WTC11 (cell line): ENCODE measurements at regions of chr1 and their contacts with region 1.

Region 1: GRCh38 chr1:36187800-36188593 is 32.0 kb downstream of the MAP7D1 start:
- DNase-seq: peak; percentile 86
- ATAC-seq: peak; percentile 94
- H3K4me3 Mint-ChIP-seq: peak overlapping the region; percentile 56
- H3K27ac Mint-ChIP-seq: peak overlapping the region; percentile 94
- H3K4me1 Mint-ChIP-seq: peaks cover 15% of the 10 kb centered on the region
- H3K27me3 Mint-ChIP-seq: no peaks in the 10 kb centered on the region
- CTCF ChIP-seq: peak; percentile 70

Region 2: GRCh38 chr1:36068883-36069282 is 119.1 kb before region 1 on chr1:
- CTCF ChIA-PET with region 1: no interaction called
- POLR2A ChIA-PET with region 1: no interaction called
- DNase-seq: no peak
- ATAC-seq: no peak
- H3K4me3 Mint-ChIP-seq: no peak overlapping the region
- H3K27ac Mint-ChIP-seq: no peak overlapping the region
- H3K4me1 Mint-ChIP-seq: peaks cover 11% of the 10 kb centered on the region
- H3K27me3 Mint-ChIP-seq: no peaks in the 10 kb centered on the region
- CTCF ChIP-seq: no peak

Region 3: DNA sequence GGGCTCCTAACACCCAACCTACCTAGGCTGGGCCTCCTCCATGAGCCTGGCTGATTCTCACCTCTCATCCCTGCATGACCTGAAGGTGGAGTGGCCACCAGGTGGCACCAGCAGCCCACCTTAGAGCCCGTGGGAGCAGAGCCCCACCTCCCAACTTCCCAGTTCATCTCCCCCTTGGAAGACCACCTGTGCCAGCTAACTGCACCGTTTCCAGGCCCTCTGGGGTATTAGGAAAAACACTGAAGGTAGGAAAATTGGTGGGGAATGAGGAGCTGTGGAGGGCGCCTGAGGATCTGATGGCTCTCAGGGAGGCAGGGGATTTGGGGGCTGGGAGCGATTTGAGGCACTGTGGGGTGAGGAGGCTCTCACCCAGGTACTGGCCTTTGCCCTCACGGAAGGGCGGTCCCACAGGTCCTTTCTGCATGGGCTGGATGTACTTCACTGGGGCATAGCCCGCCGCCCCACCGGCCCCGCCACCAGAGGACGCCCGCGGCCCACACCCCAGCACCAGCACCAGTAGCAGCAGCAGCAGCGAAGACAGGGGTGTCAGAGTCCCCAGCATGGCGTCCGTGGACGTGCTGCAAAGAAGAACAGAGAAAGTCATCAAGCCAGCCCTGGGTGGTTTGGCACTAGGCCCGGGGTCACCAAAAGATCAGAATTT is 88.2 kb before region 1 on chr1:
- CTCF ChIA-PET with region 1: interaction called, 41 read pairs
- POLR2A ChIA-PET with region 1: no interaction called
- DNase-seq: peak; percentile 92
- ATAC-seq: peak; percentile 76
- H3K4me3 Mint-ChIP-seq: no peak overlapping the region
- H3K27ac Mint-ChIP-seq: no peak overlapping the region
- H3K4me1 Mint-ChIP-seq: peaks cover 16% of the 10 kb centered on the region
- H3K27me3 Mint-ChIP-seq: no peaks in the 10 kb centered on the region
- CTCF ChIP-seq: peak; percentile 76

Region 4: GRCh38 chr1:36155408-36156328 is 32.3 kb before region 1 on chr1 and contains the start of gene MAP7D1:
- CTCF ChIA-PET with region 1: interaction called, 213 read pairs
- POLR2A ChIA-PET with region 1: interaction called, 25 read pairs
- DNase-seq: peak; percentile 80
- ATAC-seq: peak; percentile 43
- H3K4me3 Mint-ChIP-seq: peak within 1 kb of the TSS; percentile 79
- H3K27ac Mint-ChIP-seq: no peak within 1 kb of the TSS
- H3K4me1 Mint-ChIP-seq: peaks cover 43% of the 10 kb centered on the region
- H3K27me3 Mint-ChIP-seq: peaks cover 37% of the 10 kb centered on the region
- CTCF ChIP-seq: no peak
- total RNA-seq, gene MAP7D1: 65.0 to 88.7 TPM (median 72.0 TPM) in 3 replicates

Region 5: DNA sequence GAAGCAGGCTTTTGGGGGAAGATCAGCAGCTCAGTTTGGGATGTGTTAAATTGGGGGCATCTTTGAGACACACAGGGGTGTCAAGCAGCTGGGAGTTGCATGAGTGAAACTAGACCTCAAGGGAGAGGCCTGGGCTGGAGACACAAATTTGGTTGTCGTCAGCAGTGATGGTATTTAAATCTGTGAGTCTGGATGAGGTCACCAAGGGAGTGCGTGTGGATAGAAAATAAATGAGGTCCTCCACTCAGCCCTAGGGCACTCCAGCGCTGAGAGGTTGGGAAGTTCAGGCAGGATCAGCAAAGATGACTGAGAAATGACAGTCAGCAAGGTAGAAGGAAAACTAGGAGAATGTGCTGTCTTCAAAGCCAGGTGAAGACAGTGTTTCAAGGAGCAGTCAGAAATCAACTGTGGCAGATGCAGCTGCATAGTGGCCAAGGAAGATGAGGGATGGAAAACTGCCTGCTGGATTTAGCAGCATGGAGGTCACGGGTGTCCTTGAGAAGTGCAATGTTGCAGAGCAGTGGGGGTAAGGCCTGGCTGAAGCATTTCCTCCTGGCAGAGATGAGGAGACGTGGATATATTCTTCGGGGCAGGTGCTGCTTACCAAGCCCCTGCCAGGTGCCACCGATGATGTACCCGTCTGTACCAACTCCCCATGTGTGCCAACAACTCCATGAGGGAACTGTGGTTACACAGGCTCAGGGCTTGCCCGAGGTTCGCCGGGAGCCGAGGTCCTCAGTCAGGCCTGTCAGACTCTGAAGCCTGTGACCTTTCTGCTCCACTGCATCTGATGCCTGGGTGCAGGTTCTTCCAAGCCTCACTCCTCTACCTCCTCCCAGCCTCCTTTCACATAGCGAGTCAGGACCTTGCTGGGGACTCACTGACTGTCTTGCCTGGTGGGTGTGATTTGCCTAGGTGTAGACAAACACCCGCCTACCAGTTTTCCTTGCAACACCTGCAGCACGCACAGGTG is 20.8 kb before region 1 on chr1:
- CTCF ChIA-PET with region 1: interaction called, 71 read pairs
- POLR2A ChIA-PET with region 1: no interaction called
- DNase-seq: no peak
- ATAC-seq: no peak
- H3K4me3 Mint-ChIP-seq: no peak overlapping the region
- H3K27ac Mint-ChIP-seq: peak overlapping the region; percentile 12
- H3K4me1 Mint-ChIP-seq: peaks cover 3% of the 10 kb centered on the region
- H3K27me3 Mint-ChIP-seq: no peaks in the 10 kb centered on the region
- CTCF ChIP-seq: no peak

Region 6: DNA sequence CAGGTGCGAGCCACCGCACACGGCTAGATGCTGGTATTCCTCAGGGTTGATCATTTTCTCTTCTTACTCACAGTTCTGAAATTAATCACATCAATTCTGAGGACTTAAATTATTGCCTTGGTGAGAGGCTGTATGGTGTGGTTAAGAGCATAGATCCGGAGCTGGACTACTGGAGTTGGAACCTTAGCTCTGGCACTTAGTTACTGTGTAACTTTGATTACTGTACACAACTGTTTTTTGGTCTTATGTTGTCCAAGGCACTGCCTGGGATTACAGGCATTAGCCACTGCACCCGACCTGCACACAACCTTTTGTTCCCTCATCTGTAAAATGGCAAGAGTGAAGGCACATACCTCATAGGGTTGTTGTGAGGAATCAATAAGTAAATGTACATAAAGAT is 10.6 kb after region 1 on chr1:
- CTCF ChIA-PET with region 1: interaction called, 20 read pairs
- POLR2A ChIA-PET with region 1: no interaction called
- DNase-seq: no peak
- ATAC-seq: no peak
- H3K4me3 Mint-ChIP-seq: no peak overlapping the region
- H3K27ac Mint-ChIP-seq: no peak overlapping the region
- H3K4me1 Mint-ChIP-seq: peaks cover 4% of the 10 kb centered on the region
- H3K27me3 Mint-ChIP-seq: no peaks in the 10 kb centered on the region; the same call in 1 of the 2 replicates
- CTCF ChIP-seq: no peak

Region 7: GRCh38 chr1:36285448-36286101 is 97.6 kb after region 1 on chr1:
- CTCF ChIA-PET with region 1: interaction called, 18 read pairs
- POLR2A ChIA-PET with region 1: no interaction called
- DNase-seq: peak; percentile 44
- ATAC-seq: peak; percentile 71
- H3K4me3 Mint-ChIP-seq: no peak overlapping the region
- H3K27ac Mint-ChIP-seq: peak overlapping the region; percentile 57; the same call in 1 of the 2 replicates
- H3K4me1 Mint-ChIP-seq: no peaks in the 10 kb centered on the region
- H3K27me3 Mint-ChIP-seq: no peaks in the 10 kb centered on the region
- CTCF ChIP-seq: peak; percentile 55

Region 8: GRCh38 chr1:36323597-36324352 is 135.8 kb after region 1 on chr1 and contains the start of gene EVA1B:
- CTCF ChIA-PET with region 1: interaction called, 10 read pairs
- POLR2A ChIA-PET with region 1: interaction called, 8 read pairs
- DNase-seq: peak; percentile 74
- ATAC-seq: peak; percentile 15
- H3K4me3 Mint-ChIP-seq: peak within 1 kb of the TSS; percentile 76
- H3K27ac Mint-ChIP-seq: peak within 1 kb of the TSS; percentile 65
- H3K4me1 Mint-ChIP-seq: peaks cover 25% of the 10 kb centered on the region
- H3K27me3 Mint-ChIP-seq: peaks cover 10% of the 10 kb centered on the region
- CTCF ChIP-seq: no peak
- total RNA-seq, gene EVA1B: 32.0 to 45.2 TPM (median 41.5 TPM) in 3 replicates